GM12878 (cell line): ENCODE measurements at regions of chr3 and their contacts with region 1.

Region 1: GRCh38 chr3:15332405-15333098 is at the start of gene SH3BP5:
- DNase-seq: no peak
- ATAC-seq: peak; percentile 85
- H3K4me3 ChIP-seq: peak within 1 kb of the TSS; percentile 86
- H3K27ac ChIP-seq: peak within 1 kb of the TSS; percentile 41
- H3K4me1 ChIP-seq: peaks cover 36% of the 10 kb centered on the region
- H3K27me3 ChIP-seq: no peaks in the 10 kb centered on the region
- CTCF ChIP-seq: peak; percentile 53 to 67 (median 59); a peak in 5 of 6 replicates
- EP300 ChIP-seq: no peak; a peak in 1 of 4 replicates
- POLR2A ChIP-seq: peak; percentile 84
- RAD21 ChIP-seq: peak; percentile 31; the same call in 1 of the 2 replicates
- polyA plus RNA-seq, gene SH3BP5: 14.9 to 33.8 TPM

Region 2: GRCh38 chr3:14549256-14549931 is 783.2 kb before region 1 on chr3:
- CTCF ChIA-PET with region 1: no interaction called
- POLR2A ChIA-PET with region 1: no interaction called
- RAD21 ChIA-PET with region 1: no interaction called
- SMC1A ChIA-PET with region 1: no interaction called
- in situ Hi-C with region 1: no loop called
- intact Hi-C with region 1: no loop called
- DNase-seq: no peak
- ATAC-seq: peak; percentile 76
- H3K4me3 ChIP-seq: no peak overlapping the region
- H3K27ac ChIP-seq: no peak overlapping the region
- H3K4me1 ChIP-seq: no peaks in the 10 kb centered on the region
- H3K27me3 ChIP-seq: peaks cover 2 to 3% of the 10 kb centered on the region in 2 experiments; a peak in 2 of 4 replicates
- CTCF ChIP-seq: peak; percentile 15 to 40 (median 31); a peak in 4 of 6 replicates
- EP300 ChIP-seq: no peak
- POLR2A ChIP-seq: no peak
- RAD21 ChIP-seq: 0 out of 2 replicates have a peak, but pooled peaks have one; percentile 5

Region 3: DNA sequence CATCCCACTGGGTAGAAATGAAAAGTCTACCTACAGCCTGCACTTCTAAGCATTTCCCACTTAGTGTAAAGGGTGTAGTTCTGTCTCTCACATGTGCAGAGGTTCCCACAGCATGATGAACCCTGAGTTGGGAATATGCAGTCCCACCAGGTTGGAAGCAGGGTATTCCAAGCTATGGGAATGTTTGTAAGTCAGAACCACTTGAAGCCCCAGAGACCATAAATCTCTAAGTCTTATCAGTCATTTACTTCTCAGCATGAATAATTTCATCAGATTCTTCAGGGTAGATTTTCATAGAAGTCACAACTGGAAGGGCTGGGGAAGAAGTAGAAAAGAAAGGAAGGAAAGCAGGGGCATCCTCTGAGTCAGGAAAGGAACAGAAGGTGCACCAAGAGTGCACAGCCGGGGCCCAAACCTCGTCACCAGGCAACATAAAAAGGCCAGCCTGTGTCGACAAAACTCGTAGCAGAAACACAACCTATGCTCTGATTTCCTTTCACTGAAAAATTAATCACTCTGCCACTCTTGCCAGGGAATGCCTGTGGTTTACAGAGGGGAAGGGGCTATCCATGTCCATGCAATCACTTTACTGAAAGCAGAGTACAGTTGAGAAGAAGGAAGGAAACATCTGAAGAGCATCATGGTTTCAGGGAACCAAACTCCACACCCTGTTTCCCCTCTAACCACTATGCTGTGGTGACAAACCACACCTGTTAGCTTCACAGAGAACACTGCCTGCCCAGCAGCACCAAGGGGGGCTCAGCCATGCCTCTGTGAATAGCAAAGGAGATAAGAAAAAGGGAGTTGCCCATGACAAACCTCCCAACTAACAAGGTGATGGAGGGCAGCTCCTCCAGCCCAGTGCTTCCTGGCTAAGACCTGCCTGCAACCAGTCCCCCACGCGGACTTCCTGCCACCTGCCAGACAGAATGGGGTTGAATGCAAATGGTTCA is 40.7 kb before region 1 on chr3:
- CTCF ChIA-PET with region 1: interaction called, 8 read pairs
- POLR2A ChIA-PET with region 1: interaction called, 3 read pairs
- RAD21 ChIA-PET with region 1: interaction called, 7 read pairs
- SMC1A ChIA-PET with region 1: interaction called, 11 read pairs
- in situ Hi-C with region 1: no loop called
- intact Hi-C with region 1: no loop called
- DNase-seq: peak; percentile 89
- ATAC-seq: peak; percentile 95
- H3K4me3 ChIP-seq: peak overlapping the region; percentile 17; the same call in 1 of the 2 replicates
- H3K27ac ChIP-seq: peak overlapping the region; percentile 73
- H3K4me1 ChIP-seq: peaks cover 38% of the 10 kb centered on the region
- H3K27me3 ChIP-seq: no peaks in the 10 kb centered on the region
- CTCF ChIP-seq: no peak
- EP300 ChIP-seq: peak; percentile 61 to 64; a peak in 3 of 4 replicates
- POLR2A ChIP-seq: no peak
- RAD21 ChIP-seq: no peak

Region 4: DNA sequence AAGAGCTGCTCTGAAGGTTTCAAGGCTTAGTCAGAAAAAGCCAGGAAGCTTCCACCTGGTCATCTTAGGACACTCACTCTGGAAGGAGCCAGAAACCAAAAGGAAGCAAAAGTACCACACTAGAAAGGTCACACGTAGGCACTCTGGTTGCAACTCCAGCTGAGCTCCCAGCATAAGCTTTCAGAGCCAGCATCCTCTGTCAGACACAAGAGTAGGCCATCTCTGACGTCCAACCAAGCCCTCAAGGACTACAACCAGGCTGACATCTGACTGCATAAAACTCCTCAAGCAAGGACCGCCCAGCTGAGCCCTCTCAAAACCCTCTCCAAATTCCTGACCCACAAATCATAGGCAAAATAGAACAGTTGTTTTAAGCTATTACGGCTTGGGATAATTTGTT is 13.0 kb before region 1 on chr3:
- CTCF ChIA-PET with region 1: interaction called, 21 read pairs
- POLR2A ChIA-PET with region 1: interaction called, 18 read pairs
- RAD21 ChIA-PET with region 1: interaction called, 10 read pairs
- SMC1A ChIA-PET with region 1: interaction called, 37 read pairs
- in situ Hi-C with region 1: no loop called
- intact Hi-C with region 1: no loop called
- DNase-seq: no peak
- ATAC-seq: 0 out of 3 replicates have a peak, but pooled peaks have one; percentile 2
- H3K4me3 ChIP-seq: no peak overlapping the region
- H3K27ac ChIP-seq: no peak overlapping the region
- H3K4me1 ChIP-seq: peaks cover 38% of the 10 kb centered on the region
- H3K27me3 ChIP-seq: no peaks in the 10 kb centered on the region
- CTCF ChIP-seq: no peak
- EP300 ChIP-seq: no peak
- POLR2A ChIP-seq: no peak
- RAD21 ChIP-seq: no peak

Region 5: DNA sequence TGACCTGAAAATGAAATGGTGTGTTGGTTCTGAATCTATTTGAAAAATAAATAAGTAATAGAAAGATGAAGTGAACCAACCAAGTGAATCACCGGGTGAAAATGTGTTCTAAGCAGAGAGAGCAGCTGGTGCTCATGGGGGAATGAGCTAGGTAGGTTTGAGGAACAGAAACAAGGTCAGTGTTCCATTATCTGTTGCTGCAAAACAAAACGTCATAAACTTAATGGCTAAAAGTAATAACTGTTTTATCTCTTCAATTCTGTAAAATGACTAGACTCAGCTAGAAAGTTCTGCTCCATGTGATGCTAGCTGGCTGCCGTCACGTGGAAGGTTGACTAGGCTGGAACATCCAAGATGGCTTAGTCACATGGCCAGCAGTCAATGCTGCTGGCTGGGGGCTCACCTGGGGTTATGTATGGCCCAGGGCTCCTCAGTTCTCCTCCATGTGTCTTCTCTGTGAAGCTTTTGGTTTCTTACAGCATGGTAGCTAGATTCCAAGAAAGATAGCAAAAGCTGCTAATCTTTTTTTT is 13.1 kb after region 1 on chr3:
- CTCF ChIA-PET with region 1: interaction called, 39 read pairs
- POLR2A ChIA-PET with region 1: interaction called, 9 read pairs
- RAD21 ChIA-PET with region 1: interaction called, 7 read pairs
- SMC1A ChIA-PET with region 1: interaction called, 40 read pairs
- in situ Hi-C with region 1: no loop called
- intact Hi-C with region 1: no loop called
- DNase-seq: peak; percentile 86
- ATAC-seq: peak; percentile 94
- H3K4me3 ChIP-seq: no peak overlapping the region
- H3K27ac ChIP-seq: peak overlapping the region; percentile 83
- H3K4me1 ChIP-seq: peaks cover 42% of the 10 kb centered on the region
- H3K27me3 ChIP-seq: no peaks in the 10 kb centered on the region
- CTCF ChIP-seq: no peak
- EP300 ChIP-seq: peak; percentile 85 to 88
- POLR2A ChIP-seq: peak; percentile 59
- RAD21 ChIP-seq: no peak

Region 6: GRCh38 chr3:15377961-15378791 is 45.6 kb after region 1 on chr3:
- CTCF ChIA-PET with region 1: interaction called, 11 read pairs
- POLR2A ChIA-PET with region 1: interaction called, 5 read pairs
- RAD21 ChIA-PET with region 1: interaction called, 12 read pairs
- SMC1A ChIA-PET with region 1: interaction called, 10 read pairs
- in situ Hi-C with region 1: no loop called
- intact Hi-C with region 1: loop called (anchors 1 kb)
- DNase-seq: peak; percentile 81
- ATAC-seq: peak; percentile 95
- H3K4me3 ChIP-seq: no peak overlapping the region
- H3K27ac ChIP-seq: peak overlapping the region; percentile 27; the same call in 1 of the 2 replicates
- H3K4me1 ChIP-seq: peaks cover 16% of the 10 kb centered on the region
- H3K27me3 ChIP-seq: no peaks in the 10 kb centered on the region
- CTCF ChIP-seq: peak; percentile 82 to 92 (median 86)
- EP300 ChIP-seq: peak; percentile 44 to 85; a peak in 2 of 4 replicates
- POLR2A ChIP-seq: no peak
- RAD21 ChIP-seq: peak; percentile 80